ENCODE measurements at regions of chr12 and their contacts with region 1.

Region 1: DNA sequence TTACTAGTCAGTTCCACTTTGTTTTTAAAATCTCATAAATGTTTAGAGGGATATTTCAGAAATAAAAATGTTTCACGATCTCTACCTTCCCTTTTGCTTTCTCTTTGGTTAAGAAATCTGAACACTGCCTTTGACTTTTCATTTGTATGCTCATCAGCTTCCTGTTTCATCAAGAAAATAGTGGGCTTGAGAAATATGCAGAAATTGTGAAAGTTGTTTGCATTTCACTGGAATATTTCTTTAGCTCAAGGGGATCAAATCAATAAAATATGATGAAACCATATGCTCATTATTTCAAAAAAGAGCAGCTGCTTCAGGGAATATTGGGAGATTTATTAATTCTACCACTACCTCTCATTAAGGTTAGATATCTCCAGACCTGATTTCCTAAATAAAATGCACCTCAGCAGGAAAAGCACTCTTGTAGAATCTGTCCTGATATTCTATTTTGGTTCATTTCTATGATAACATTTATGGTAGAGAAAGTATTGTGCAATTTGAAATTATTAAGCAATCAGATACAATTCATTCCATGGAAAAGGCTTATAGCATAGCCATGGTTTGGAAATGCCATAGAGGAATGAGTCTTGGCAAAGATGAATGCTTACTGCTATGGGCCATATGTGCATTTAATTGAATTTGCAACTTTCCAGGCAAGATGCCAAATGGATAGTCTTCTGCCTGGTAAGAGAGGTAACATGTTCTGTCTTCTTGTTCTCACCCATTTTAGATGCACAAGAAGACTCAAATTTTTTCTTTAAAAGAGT is 212.6 kb upstream of the SLC16A7 start:
- DNase-seq: no peak
- H3K4me3 ChIP-seq: no peak overlapping the region
- H3K27ac ChIP-seq: no peak overlapping the region
- H3K4me1 ChIP-seq: peaks cover 0 to 5% (median 1%) of the 10 kb centered on the region in 4 experiments; a peak in 2 of 7 replicates
- H3K27me3 ChIP-seq: no peaks in the 10 kb centered on the region
- CTCF ChIP-seq: no peak
- EP300 ChIP-seq: no peak
- POLR2A ChIP-seq: no peak
- RAD21 ChIP-seq: no peak

Region 2: GRCh38 chr12:59372956-59373355 is 10.3 kb before region 1 on chr12:
- CTCF ChIA-PET with region 1: interaction called, 10 read pairs
- POLR2A ChIA-PET with region 1: interaction called, 3 read pairs
- DNase-seq: no peak
- H3K4me3 ChIP-seq: no peak overlapping the region
- H3K27ac ChIP-seq: no peak overlapping the region
- H3K4me1 ChIP-seq: peaks cover 0 to 3% (median 0%) of the 10 kb centered on the region in 4 experiments; a peak in 1 of 7 replicates
- H3K27me3 ChIP-seq: no peaks in the 10 kb centered on the region
- CTCF ChIP-seq: peak; percentile 31 to 58 (median 46)
- EP300 ChIP-seq: no peak
- POLR2A ChIP-seq: no peak
- RAD21 ChIP-seq: peak; percentile 76